BJ (cell line): ENCODE measurements at regions of chrX and their contacts with region 1.

Region 1: DNA sequence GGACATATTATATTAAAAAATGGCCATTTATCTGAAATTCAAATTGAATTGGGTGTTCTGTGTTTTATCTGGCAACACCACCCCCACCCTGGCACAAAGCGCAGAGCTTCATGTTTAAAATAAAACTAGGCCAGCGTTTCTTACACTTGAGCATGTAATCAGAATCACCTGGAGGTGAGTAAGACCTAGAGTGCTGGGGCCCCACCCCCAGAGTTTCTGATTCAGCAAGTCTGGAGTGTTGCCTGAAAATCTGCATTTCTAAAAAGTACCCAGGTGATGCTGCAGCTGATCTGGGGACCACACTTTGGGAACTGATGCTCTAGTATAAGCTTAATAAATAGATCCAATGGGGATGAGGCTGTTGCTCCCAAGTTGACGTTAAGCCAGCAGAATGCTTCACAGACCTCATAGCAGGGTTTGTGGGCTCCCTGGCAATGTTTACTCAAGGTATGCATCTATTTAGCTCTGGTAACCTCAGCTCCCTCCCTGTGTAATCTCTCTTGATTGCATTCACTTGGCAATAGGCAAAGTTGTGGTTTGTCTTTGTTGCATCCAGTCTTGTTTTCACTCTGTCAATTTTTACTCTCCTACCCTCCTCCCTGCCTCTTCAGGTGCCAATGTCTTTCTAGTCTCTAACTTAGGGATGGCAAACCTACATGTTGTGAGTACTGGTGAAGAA is 99.8 kb upstream of the TEX13D start:
- DNase-seq: no peak
- H3K4me3 ChIP-seq: no peak overlapping the region
- H3K27me3 ChIP-seq: no peaks in the 10 kb centered on the region
- CTCF ChIP-seq: no peak

Region 2: DNA sequence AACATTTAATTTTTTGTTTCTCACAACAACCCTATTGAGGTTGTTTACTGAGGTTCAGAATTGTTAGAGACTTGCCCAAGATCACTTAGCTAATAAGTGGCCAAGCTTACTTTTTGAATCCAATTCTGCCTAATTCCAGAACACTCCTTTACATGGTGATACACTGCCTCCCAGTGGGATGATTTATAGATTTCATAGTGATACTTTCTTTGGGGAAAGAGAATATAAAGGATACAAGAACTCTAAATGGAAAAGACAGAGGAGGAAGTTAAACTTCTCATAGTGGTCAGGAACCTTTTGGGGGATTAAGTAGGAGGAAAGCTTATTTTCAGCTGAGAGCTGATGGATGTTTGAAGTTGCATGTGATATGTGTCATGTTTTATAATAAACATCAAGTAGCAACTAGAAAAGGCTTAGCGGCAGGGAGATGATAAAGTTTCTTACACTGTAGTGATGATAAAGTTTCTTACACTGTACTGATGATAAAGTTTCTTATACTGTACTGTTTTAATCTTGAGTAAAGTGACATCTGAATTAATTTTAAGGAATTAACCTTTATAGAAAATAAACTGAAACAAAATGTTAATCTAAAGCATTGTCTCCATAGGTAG is 255.9 kb before region 1 on chrX:
- CTCF ChIA-PET with region 1: no interaction called
- POLR2A ChIA-PET with region 1: interaction called, 17 read pairs
- DNase-seq: no peak
- H3K4me3 ChIP-seq: no peak overlapping the region
- H3K27me3 ChIP-seq: no peaks in the 10 kb centered on the region
- CTCF ChIP-seq: peak; percentile 11; the same call in 1 of the 2 replicates

Region 3: GRCh38 chrX:124274438-124275181 is 41.9 kb after region 1 on chrX:
- CTCF ChIA-PET with region 1: no interaction called
- POLR2A ChIA-PET with region 1: no interaction called
- DNase-seq: no peak
- H3K4me3 ChIP-seq: no peak overlapping the region
- H3K27me3 ChIP-seq: no peaks in the 10 kb centered on the region
- CTCF ChIP-seq: no peak